ENCODE measurements at regions of chr12 and their contacts with region 1.

Region 1: GRCh38 chr12:76266797-76267196 is 81.4 kb downstream of the BBS10 start:
- DNase-seq: no peak
- ATAC-seq: no peak
- H3K4me3 ChIP-seq: no peak overlapping the region
- H3K27ac ChIP-seq: no peak overlapping the region
- H3K4me1 ChIP-seq: no peaks in the 10 kb centered on the region
- H3K27me3 ChIP-seq: no peaks in the 10 kb centered on the region
- CTCF ChIP-seq: no peak

Region 2: GRCh38 chr12:76299536-76300296 is 32.9 kb after region 1 on chr12:
- CTCF ChIA-PET with region 1: interaction called, 11 read pairs
- POLR2A ChIA-PET with region 1: no interaction called
- in situ Hi-C with region 1: no loop called
- intact Hi-C with region 1: no loop called
- DNase-seq: no peak
- ATAC-seq: peak; percentile 66; the same call in 1 of the 2 replicates
- H3K4me3 ChIP-seq: no peak overlapping the region
- H3K27ac ChIP-seq: no peak overlapping the region
- H3K4me1 ChIP-seq: no peaks in the 10 kb centered on the region
- H3K27me3 ChIP-seq: no peaks in the 10 kb centered on the region
- CTCF ChIP-seq: no peak